Heart left ventricle (tissue), 16 donors: ENCODE measurements at regions of chrX and their contacts with region 1.

Region 1: GRCh38 chrX:134324359-134324758 is 87.4 kb downstream of the CCDC160 start:
- DNase-seq: no peak
- ATAC-seq: no peak
- H3K4me3 ChIP-seq: no peak overlapping the region
- H3K27ac ChIP-seq: no peak overlapping the region
- H3K4me1 ChIP-seq: no peaks in the 10 kb centered on the region
- H3K27me3 ChIP-seq: peaks cover 0 to 6% (median 0%) of the 10 kb centered on the region in 9 donors
- CTCF ChIP-seq: no peak
- POLR2A ChIP-seq: no peak

Region 2: DNA sequence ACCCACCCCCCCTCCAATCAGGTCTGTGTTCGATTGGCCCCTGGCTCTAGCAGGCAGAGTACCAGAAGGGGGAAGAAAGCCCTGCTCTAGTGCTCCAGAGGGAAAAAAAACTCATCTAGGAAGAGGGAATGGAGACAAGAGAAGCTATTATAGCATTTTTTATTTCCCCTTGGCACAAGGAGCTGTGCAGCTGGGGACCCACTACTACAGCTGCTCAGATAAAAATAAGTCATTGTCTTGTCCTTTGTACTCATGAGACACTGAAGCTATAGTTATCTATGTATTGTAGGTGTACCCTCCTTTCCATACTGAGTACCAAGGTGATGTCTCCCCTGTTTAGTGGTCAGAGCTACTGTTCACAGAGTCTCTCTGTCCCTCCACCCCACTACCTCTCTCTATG is 73.1 kb before region 1 on chrX:
- intact Hi-C with region 1: no loop called
- DNase-seq: no peak
- ATAC-seq: no peak
- H3K4me3 ChIP-seq: no peak overlapping the region
- H3K27ac ChIP-seq: no peak overlapping the region
- H3K4me1 ChIP-seq: no peaks in the 10 kb centered on the region
- H3K27me3 ChIP-seq: peaks cover 0 to 17% (median 0%) of the 10 kb centered on the region in 9 donors
- CTCF ChIP-seq: no peak
- POLR2A ChIP-seq: no peak

Region 3: DNA sequence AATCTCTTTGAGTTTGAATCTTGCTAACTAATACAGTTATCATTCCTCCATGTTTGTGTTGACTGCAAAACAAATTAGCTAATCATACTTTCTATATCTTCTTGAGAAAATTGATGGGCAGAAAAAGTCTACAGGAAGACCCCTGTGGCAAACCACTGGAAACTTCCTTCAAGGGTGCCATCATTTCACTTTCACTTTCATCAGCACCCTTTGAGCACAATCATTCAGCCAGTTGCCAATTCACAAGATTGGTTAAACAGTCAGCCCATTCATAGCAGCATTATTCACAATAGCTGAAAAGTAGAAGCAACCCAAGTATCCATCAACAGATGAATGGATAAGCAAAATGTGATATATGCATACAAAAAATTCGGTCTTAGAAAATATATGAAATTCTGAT is 14.2 kb after region 1 on chrX:
- intact Hi-C with region 1: loop called in 1 of 10 experiments (anchors 1 kb)
- DNase-seq: no peak
- ATAC-seq: no peak
- H3K4me3 ChIP-seq: no peak overlapping the region
- H3K27ac ChIP-seq: no peak overlapping the region
- H3K4me1 ChIP-seq: no peaks in the 10 kb centered on the region
- H3K27me3 ChIP-seq: peaks cover 0 to 22% (median 0%) of the 10 kb centered on the region in 9 donors
- CTCF ChIP-seq: no peak
- POLR2A ChIP-seq: no peak